ENCODE measurements at regions of chr20 and their contacts with region 1.

Region 1: DNA sequence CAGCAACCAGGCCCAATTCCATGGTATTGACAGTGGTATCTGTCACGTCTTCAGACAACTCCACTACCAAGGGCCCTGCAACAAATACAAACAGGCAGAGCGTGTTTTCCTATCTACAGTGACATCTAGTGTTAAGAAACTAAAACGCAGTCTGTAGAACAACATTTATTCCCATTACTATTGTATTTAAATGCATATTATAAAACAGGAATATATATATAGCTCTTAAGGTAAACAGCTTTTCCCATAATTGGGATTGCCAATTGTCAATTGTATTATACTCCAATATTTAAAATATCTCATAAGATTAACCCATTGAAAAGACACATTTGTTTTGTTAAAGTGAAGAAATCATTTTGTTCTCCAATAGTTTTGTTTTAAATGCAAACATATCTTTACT is 97.2 kb downstream of the KIF16B start:
- DNase-seq: no peak
- H3K4me3 ChIP-seq: no peak overlapping the region
- CTCF ChIP-seq: peak; percentile 38

Region 2: GRCh38 chr20:16441546-16442164 is 34.4 kb before region 1 on chr20:
- CTCF ChIA-PET with region 1: no interaction called
- POLR2A ChIA-PET with region 1: no interaction called
- DNase-seq: no peak
- H3K4me3 ChIP-seq: no peak overlapping the region
- CTCF ChIP-seq: no peak

Region 3: DNA sequence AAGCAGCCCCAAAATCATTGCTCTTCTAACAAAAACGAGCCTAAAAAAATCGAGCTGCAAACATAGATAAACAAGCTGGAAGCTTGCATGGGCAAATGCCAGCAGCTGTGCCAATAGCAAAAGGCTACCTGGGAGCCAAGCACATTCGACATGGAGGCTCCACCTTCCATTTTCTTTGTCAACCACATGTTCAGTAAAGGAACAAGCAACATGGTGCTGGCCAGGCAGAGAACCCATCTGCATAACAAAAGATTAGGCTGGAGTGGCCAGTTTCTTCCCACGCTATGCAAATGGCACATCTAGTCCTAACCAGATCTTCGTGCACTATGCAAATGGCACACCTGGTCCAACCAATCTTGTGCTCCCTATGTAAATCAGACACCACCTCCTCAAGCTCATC is 13.3 kb before region 1 on chr20:
- CTCF ChIA-PET with region 1: interaction called, 11 read pairs
- POLR2A ChIA-PET with region 1: no interaction called
- DNase-seq: no peak
- H3K4me3 ChIP-seq: no peak overlapping the region
- CTCF ChIP-seq: no peak